Psoas muscle (tissue), 8 donors: ENCODE measurements at regions of chr14 and their contacts with region 1.

Region 1: GRCh38 chr14:63543000-63543825 is at the start of gene PPP2R5E:
- DNase-seq: peak; percentile 98 to 99
- ATAC-seq: peak; percentile 98 to 100 (median 99)
- H3K4me3 ChIP-seq: peak within 1 kb of the TSS; percentile 98
- H3K27ac ChIP-seq: peak within 1 kb of the TSS; percentile 94
- H3K4me1 ChIP-seq: peaks cover 14% of the 10 kb centered on the region
- H3K27me3 ChIP-seq: no peaks in the 10 kb centered on the region
- CTCF ChIP-seq: no peak
- total RNA-seq, gene PPP2R5E: 29.3 to 35.0 (median 31.9) TPM

Region 2: DNA sequence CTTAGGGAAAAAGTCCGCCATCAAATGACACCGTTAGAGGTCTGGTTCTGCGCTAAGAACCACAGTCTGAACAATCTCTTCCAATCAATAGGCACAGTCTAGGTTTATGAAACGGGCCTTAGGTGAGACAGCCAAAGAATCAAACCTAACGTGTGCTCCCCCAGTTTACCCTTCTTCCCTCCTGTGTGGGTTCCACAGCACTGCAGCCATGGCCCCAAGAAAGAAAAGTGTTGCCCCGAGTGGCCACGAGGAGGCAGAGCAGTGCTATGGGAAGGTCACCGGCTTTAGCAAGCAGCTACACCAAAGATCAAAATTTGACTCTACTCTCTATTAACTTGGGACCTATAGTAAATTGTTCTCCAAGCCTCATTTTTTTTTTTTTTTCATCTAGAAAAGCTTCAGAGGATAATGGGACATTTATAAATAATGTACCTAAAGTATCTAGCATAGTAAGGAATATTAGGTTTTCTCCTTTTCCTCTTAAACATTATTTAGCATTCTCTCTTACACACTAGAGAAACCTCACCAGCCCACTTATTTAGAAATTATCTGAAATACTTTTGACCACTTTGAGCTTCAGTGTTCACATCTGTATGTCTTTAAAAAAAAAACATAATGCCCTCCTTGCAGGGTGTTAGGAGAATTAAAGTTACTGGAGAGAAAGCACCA is 154.3 kb before region 1 on chr14:
- intact Hi-C with region 1: loop called (anchors 2 kb)
- DNase-seq: peak; percentile 62 to 72
- ATAC-seq: peak; percentile 74 to 96 (median 92)
- H3K4me3 ChIP-seq: no peak overlapping the region
- H3K27ac ChIP-seq: no peak overlapping the region
- H3K4me1 ChIP-seq: no peaks in the 10 kb centered on the region
- H3K27me3 ChIP-seq: no peaks in the 10 kb centered on the region
- CTCF ChIP-seq: peak; percentile 81

Region 3: DNA sequence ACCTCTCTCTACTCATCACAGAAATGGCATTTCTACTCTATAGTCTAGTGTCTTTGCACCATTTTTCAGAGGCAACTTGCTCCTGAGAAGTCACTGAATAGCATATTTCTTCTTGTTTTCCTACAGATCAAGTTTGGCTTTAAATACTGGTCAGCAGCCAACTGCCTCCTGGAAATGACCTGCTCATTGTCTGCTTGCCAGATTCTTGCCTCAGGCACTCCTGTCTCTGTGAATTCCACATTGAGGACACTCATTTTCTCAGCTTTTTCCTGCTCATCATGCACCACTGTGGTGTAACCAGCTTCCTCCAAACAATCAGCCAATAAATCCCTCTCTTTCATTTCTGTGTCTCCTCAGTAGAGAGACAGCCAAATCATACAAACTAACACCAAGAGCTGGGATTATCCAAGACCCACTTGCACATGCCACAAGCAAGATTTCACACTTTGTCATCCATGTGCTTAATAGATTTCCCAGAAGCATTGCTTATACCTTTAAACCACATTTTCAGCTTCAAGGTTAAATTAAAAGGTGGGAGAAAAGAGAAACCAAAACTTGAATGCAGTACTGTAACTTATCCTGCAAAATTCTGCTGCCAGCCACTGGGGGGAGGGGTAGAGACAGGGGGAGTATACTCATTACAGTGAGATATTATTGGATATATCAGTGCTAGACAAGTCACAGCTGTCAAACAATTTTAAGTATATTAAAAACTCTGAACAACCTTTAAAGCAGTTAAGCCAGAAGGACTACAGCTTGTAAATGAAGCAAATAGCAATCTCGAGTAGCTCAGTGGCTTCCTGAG is 105.1 kb before region 1 on chr14:
- intact Hi-C with region 1: loop called (anchors 5 to 10 kb)
- DNase-seq: peak; percentile 33 to 53
- ATAC-seq: peak; percentile 48 to 62 (median 54)
- H3K4me3 ChIP-seq: peak overlapping the region; percentile 30
- H3K27ac ChIP-seq: peak overlapping the region; percentile 78
- H3K4me1 ChIP-seq: peaks cover 57% of the 10 kb centered on the region
- H3K27me3 ChIP-seq: no peaks in the 10 kb centered on the region
- CTCF ChIP-seq: no peak

Region 4: GRCh38 chr14:63641473-63642228 is 98.4 kb after region 1 on chr14 and contains the start of gene WDR89:
- intact Hi-C with region 1: loop called in 1 of 2 experiments (anchors 5 kb)
- DNase-seq: peak; percentile 96 to 98
- ATAC-seq: peak; percentile 94 to 97 (median 96)
- H3K4me3 ChIP-seq: peak within 1 kb of the TSS; percentile 72
- H3K27ac ChIP-seq: peak within 1 kb of the TSS; percentile 95
- H3K4me1 ChIP-seq: no peaks in the 10 kb centered on the region
- H3K27me3 ChIP-seq: no peaks in the 10 kb centered on the region
- CTCF ChIP-seq: peak; percentile 88
- total RNA-seq, gene WDR89: 8.6 to 11.4 (median 10.0) TPM